Colonic mucosa (tissue), 4 donors: ENCODE measurements at regions of chr1 and their contacts with region 1.

Region 1: DNA sequence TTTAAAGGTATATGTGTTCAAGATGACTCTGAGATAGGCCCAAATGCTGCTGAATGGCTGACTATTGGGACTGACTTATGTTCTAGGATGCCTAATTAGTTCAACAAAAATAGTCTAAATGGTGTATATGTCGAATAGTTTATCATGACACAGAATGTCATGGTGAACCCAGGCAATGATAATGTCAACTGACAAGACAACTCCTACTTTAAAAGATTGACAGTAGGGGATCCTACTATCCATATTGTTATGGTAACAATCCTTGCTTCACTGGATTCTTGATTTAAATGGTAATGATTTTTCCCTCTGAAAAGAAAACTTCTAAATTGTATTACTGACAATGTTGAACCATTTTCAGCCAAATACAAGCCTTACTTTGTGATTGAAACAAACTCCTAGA is 279.7 kb downstream of the NTNG1 start:
- DNase-seq: no peak
- H3K4me3 ChIP-seq: no peak overlapping the region
- H3K27ac ChIP-seq: no peak overlapping the region
- H3K4me1 ChIP-seq: no peaks in the 10 kb centered on the region
- H3K27me3 ChIP-seq: no peaks in the 10 kb centered on the region
- CTCF ChIP-seq: no peak

Region 2: GRCh38 chr1:107277022-107277421 is 143.5 kb before region 1 on chr1:
- intact Hi-C with region 1: loop called (anchors 10 kb)
- DNase-seq: peak; percentile 41
- H3K4me3 ChIP-seq: no peak overlapping the region
- H3K27ac ChIP-seq: no peak overlapping the region
- H3K4me1 ChIP-seq: no peaks in the 10 kb centered on the region
- H3K27me3 ChIP-seq: no peaks in the 10 kb centered on the region
- CTCF ChIP-seq: peak; percentile 29